Cardiac septum (tissue), 1 donor: ENCODE measurements at regions of chr12 and their contacts with region 1.

Region 1: DNA sequence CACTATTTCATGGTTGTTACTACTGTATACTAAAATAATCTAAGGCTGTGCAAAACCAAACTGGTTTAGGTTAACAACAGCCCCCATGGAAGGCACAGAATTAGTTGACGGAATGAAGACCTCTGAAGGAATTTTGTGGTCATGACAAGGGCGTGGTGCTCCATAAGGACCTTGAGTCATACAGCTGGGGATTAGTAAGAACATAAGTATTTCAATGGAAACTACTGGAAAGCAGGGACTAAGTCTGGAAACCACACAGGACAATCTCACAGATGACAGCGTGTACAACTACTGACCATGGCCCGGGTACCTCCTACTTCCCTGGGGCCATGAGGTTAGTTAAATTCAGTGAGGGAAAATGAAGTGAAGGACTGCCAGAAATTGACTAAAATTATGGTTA is 98.5 kb upstream of the PLEKHA5 start:
- DNase-seq: no peak

Region 2: DNA sequence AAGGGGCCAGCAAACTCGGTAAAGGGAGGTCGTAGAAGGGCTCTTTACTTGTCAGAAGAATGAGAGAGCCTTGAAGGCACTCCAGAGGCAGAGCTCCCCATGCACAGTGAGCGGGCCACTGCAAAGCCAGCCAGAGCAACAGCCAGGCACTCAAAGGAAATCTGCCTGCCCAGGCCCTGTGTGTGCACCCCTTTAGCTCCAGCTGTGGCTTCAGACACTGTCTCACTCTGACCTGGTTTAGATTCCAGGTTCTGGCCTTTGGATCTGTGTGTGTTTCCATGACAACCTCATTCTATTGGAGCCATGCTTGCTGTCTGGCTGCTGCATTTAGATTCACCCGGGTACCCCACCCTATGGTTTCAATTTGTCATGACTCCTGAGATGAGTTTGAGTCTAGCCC is 122.8 kb before region 1 on chr12:
- intact Hi-C with region 1: loop called (anchors 5 kb)
- DNase-seq: no peak

Region 3: GRCh38 chr12:19095756-19096480 is 64.9 kb after region 1 on chr12:
- intact Hi-C with region 1: loop called (anchors 10 kb)
- DNase-seq: no peak

Region 4: DNA sequence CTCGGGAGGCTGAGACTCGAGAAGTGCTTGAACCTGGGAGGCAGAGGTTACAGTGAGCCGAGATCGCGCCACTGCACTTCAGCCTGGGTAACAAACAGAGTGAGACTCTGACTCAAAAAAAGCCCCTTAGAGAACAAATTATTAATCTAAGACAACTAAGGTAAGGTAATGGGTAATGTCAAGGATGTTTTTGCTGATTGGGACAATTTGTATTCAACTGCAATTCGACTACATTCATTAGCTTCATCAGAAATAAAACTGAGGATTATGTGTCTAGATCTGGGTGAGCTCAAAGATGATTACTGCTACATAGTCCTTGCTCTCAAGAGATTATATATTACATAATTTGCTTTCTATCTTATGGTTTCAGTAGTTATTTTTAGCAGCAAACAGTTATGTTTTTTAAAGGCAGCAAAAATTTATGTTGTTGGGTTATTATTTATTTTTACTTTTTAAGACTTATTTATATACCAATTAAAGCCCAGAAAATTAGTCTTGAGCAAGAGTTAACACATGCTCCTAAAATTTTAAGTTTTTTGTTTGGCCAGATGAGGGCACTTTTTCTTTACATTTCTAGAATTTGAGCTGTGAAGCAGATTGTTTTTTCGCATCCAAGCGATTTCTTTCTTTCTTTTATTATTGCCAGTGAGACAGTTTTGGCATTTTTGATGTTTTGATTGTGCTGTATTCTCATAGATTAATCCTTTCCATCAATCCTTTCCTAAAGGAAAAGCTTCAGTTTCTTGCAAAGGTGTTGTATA is 150.8 kb after region 1 on chr12:
- intact Hi-C with region 1: loop called (anchors 5 kb)
- DNase-seq: no peak